SK-N-SH (cell line): ENCODE measurements at regions of chr11 and their contacts with region 1.

Region 1: DNA sequence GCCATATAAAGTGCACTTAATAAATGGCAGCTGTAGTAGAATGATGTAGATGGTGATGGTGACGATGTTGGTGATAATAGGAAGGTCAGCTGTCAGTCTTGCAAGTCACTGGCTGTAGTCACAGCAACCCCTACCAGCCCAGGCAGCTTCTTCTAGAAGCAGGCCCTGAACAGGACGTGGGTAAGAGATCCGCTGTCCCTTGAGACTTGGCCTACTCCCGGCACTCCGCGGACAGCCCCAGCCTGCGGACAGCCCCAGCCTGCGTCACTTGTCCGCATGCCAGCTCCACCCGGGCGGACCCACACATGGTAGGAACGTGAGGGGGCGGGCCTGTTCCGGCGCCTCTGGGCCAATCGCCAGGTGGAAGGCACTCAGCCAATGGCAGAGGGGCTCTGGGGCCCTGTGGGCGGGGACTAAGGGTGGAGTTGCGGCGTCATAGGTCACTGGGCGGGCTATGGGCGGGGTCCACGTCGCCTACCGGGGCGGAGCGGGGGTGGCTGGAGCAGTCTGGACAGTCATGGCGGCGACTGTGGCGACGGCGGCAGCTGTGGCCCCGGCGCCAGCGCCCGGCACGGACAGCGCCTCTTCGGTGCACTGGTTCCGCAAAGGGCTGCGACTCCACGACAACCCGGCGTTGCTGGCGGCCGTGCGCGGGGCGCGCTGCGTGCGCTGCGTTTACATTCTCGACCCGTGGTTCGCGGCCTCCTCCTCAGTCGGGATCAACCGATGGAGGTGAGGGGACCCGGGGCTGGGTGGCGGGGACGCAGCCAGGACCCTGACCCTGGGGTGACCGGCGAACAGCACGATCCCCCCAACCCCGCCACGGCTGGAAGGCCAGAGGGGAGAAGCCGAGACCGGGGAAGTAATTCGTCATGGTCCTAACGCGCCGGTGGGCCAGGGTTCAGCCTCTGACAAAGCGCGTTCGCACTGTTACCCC is at the start of gene CRY2:
- DNase-seq: peak; percentile 99
- H3K4me3 ChIP-seq: peak within 1 kb of the TSS; percentile 92 to 97
- H3K27ac ChIP-seq: peak within 1 kb of the TSS; percentile 23 to 86
- H3K4me1 ChIP-seq: peaks cover 11 to 19% of the 10 kb centered on the region in 2 experiments
- H3K27me3 ChIP-seq: no peaks in the 10 kb centered on the region
- CTCF ChIP-seq: no peak
- EP300 ChIP-seq: no peak; a peak in 1 of 4 replicates
- RAD21 ChIP-seq: no peak
- polyA plus RNA-seq, gene CRY2: 6.7 and 9.1 TPM in 2 replicates

Region 2: GRCh38 chr11:45155058-45155551 is 692.1 kb before region 1 on chr11:
- CTCF ChIA-PET with region 1: no interaction called
- POLR2A ChIA-PET with region 1: no interaction called
- DNase-seq: no peak
- H3K4me3 ChIP-seq: no peak overlapping the region
- H3K27ac ChIP-seq: no peak overlapping the region
- H3K4me1 ChIP-seq: peaks cover 0 to 37% of the 10 kb centered on the region in 2 experiments; a peak in 1 of 4 replicates
- H3K27me3 ChIP-seq: no peaks in the 10 kb centered on the region
- CTCF ChIP-seq: no peak
- EP300 ChIP-seq: no peak
- RAD21 ChIP-seq: no peak

Region 3: GRCh38 chr11:45825261-45825660 is 22.0 kb before region 1 on chr11:
- CTCF ChIA-PET with region 1: interaction called, 47 read pairs
- POLR2A ChIA-PET with region 1: no interaction called
- DNase-seq: no peak
- H3K4me3 ChIP-seq: no peak overlapping the region
- H3K27ac ChIP-seq: no peak overlapping the region
- H3K4me1 ChIP-seq: no peaks in the 10 kb centered on the region; a peak in 2 of 4 replicates
- H3K27me3 ChIP-seq: peaks cover 20% of the 10 kb centered on the region; the same call in 1 of the 2 replicates
- CTCF ChIP-seq: no peak
- EP300 ChIP-seq: no peak
- RAD21 ChIP-seq: no peak

Region 4: GRCh38 chr11:45834298-45834756 is 12.9 kb before region 1 on chr11:
- CTCF ChIA-PET with region 1: interaction called, 47 read pairs
- POLR2A ChIA-PET with region 1: no interaction called
- DNase-seq: no peak
- H3K4me3 ChIP-seq: no peak overlapping the region
- H3K27ac ChIP-seq: no peak overlapping the region
- H3K4me1 ChIP-seq: no peaks in the 10 kb centered on the region; a peak in 1 of 4 replicates
- H3K27me3 ChIP-seq: peaks cover 5% of the 10 kb centered on the region; the same call in 1 of the 2 replicates
- CTCF ChIP-seq: no peak
- EP300 ChIP-seq: no peak
- RAD21 ChIP-seq: no peak

Region 5: GRCh38 chr11:45859661-45860140 is 12.5 kb after region 1 on chr11:
- CTCF ChIA-PET with region 1: interaction called, 19 read pairs
- POLR2A ChIA-PET with region 1: interaction called, 5 read pairs
- DNase-seq: peak; percentile 87
- H3K4me3 ChIP-seq: no peak overlapping the region
- H3K27ac ChIP-seq: peak overlapping the region; percentile 87 to 95
- H3K4me1 ChIP-seq: peaks cover 36 to 52% of the 10 kb centered on the region in 2 experiments
- H3K27me3 ChIP-seq: no peaks in the 10 kb centered on the region
- CTCF ChIP-seq: no peak
- EP300 ChIP-seq: peak; percentile 58 to 65; a peak in 3 of 4 replicates
- RAD21 ChIP-seq: peak; percentile 33; the same call in 1 of the 2 replicates

Region 6: GRCh38 chr11:45879803-45880686 is 32.8 kb after region 1 on chr11:
- CTCF ChIA-PET with region 1: interaction called, 11 read pairs
- POLR2A ChIA-PET with region 1: no interaction called
- DNase-seq: no peak
- H3K4me3 ChIP-seq: no peak overlapping the region
- H3K27ac ChIP-seq: peak overlapping the region; percentile 74 to 97
- H3K4me1 ChIP-seq: peaks cover 24 to 47% of the 10 kb centered on the region in 2 experiments
- H3K27me3 ChIP-seq: no peaks in the 10 kb centered on the region
- CTCF ChIP-seq: no peak
- EP300 ChIP-seq: peak; percentile 43 to 47; a peak in 3 of 4 replicates
- RAD21 ChIP-seq: 0 out of 2 replicates have a peak, but pooled peaks have one; percentile 4